HepG2 (cell line): ENCODE measurements at regions of chr1 and their contacts with region 1.

Region 1: GRCh38 chr1:235160957-235161684 is at the start of gene RBM34:
- DNase-seq: peak; percentile 89
- ATAC-seq: peak; percentile 93
- H3K4me3 ChIP-seq: peak within 1 kb of the TSS; percentile 75 to 91 (median 76)
- H3K27ac ChIP-seq: peak within 1 kb of the TSS; percentile 85
- H3K4me1 ChIP-seq: peaks cover 51% of the 10 kb centered on the region
- H3K27me3 ChIP-seq: no peaks in the 10 kb centered on the region
- CTCF ChIP-seq: peak; percentile 42
- EP300 ChIP-seq: no peak
- POLR2A ChIP-seq: peak; percentile 90 to 96
- RAD21 ChIP-seq: peak; percentile 36; the same call in 1 of the 2 replicates
- total RNA-seq, gene RBM34: 73.0 and 105 TPM in 2 replicates

Region 2: DNA sequence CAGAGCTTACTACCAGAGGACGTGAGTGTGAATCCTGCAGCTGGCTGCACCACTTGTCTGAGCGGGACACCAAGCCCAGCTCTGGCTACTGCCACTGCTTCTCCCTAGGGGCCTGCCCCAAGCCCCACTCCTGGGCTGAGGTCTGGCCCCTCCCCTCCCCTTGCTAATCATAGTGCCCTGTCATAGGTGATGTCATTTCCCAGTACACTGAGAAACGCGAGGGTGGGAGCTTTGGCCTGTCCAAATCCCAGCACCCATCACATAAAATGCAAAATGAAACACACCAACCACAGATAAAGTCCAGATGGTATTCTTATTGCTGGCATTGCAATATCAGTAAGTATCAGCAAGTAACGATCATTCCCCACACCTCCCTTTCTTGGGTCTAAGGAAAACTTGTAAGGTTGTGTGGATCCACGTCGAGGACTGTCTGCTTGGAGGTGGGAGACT is 110.2 kb before region 1 on chr1:
- CTCF ChIA-PET with region 1: no interaction called
- POLR2A ChIA-PET with region 1: no interaction called
- in situ Hi-C with region 1: no loop called
- intact Hi-C with region 1: no loop called
- DNase-seq: no peak
- ATAC-seq: peak; percentile 14; the same call in 2 of the 3 replicates
- H3K4me3 ChIP-seq: no peak overlapping the region
- H3K27ac ChIP-seq: no peak overlapping the region
- H3K4me1 ChIP-seq: peaks cover 27% of the 10 kb centered on the region
- H3K27me3 ChIP-seq: no peaks in the 10 kb centered on the region
- CTCF ChIP-seq: no peak
- EP300 ChIP-seq: no peak
- POLR2A ChIP-seq: 0 out of 4 replicates have a peak, but pooled peaks of 1 of the 2 experiments have one; percentile 17
- RAD21 ChIP-seq: no peak

Region 3: GRCh38 chr1:235105051-235106043 is 55.8 kb before region 1 on chr1:
- CTCF ChIA-PET with region 1: no interaction called
- POLR2A ChIA-PET with region 1: no interaction called
- in situ Hi-C with region 1: no loop called
- intact Hi-C with region 1: loop called (anchors 10 kb)
- DNase-seq: no peak
- ATAC-seq: 0 out of 3 replicates have a peak, but pooled peaks have one; percentile 1
- H3K4me3 ChIP-seq: no peak overlapping the region
- H3K27ac ChIP-seq: no peak overlapping the region
- H3K4me1 ChIP-seq: peaks cover 24% of the 10 kb centered on the region
- H3K27me3 ChIP-seq: no peaks in the 10 kb centered on the region
- CTCF ChIP-seq: no peak
- EP300 ChIP-seq: no peak
- POLR2A ChIP-seq: no peak
- RAD21 ChIP-seq: no peak

Region 4: DNA sequence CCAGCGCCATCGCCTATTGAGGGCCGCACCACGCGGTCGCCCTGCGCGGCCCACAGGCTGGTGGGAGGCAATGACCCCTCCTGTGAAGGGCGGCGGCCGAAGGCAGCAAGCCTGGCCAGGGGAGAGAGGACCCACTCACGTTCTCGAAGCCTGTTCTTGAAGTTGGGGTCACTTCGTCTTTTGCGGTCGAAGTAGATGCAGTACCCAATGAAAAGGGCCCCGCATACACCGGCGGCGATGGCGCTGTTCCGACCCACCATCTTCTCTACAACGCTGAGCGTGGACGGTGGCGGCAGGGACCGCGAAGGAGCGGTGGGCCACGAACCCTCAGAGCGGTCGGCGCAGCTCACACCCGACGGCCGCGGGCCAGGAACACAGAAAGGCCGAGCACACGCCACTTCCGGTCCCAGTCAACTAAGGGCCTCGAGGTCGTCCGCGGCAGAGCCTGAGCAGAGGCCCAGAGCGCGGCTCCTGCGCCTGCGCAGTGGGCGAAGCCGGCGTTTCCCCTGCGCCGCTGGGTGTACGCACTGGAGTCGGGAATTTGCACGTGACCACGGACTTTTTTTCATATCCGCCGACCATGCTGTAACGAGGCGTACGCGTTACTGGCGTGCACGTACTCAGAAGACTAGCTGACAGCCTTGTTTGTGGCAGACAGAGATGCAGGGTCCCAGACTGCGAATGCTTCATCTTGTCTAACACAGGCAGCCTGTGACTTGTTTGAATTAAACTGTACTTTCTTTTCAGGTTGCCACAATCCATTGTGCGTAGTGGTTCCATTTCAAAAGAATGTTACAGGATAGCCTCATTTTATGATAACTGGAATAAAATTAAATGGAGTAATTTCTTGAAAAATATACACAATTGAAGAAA is 32.4 kb before region 1 on chr1 and contains the start of gene TOMM20:
- CTCF ChIA-PET with region 1: no interaction called
- POLR2A ChIA-PET with region 1: interaction called, 15 read pairs
- in situ Hi-C with region 1: no loop called
- intact Hi-C with region 1: loop called (anchors 5 kb)
- DNase-seq: peak; percentile 97
- ATAC-seq: peak; percentile 92
- H3K4me3 ChIP-seq: peak within 1 kb of the TSS; percentile 82 to 94 (median 89)
- H3K27ac ChIP-seq: peak within 1 kb of the TSS; percentile 94
- H3K4me1 ChIP-seq: peaks cover 55% of the 10 kb centered on the region
- H3K27me3 ChIP-seq: no peaks in the 10 kb centered on the region; a peak in 1 of 5 replicates
- CTCF ChIP-seq: no peak
- EP300 ChIP-seq: peak in 1 of 2 experiments; percentile 5; a peak in 1 of 4 replicates
- POLR2A ChIP-seq: peak; percentile 93 to 96
- RAD21 ChIP-seq: 0 out of 2 replicates have a peak, but pooled peaks have one; percentile 11
- total RNA-seq, gene TOMM20: 138 and 153 TPM in 2 replicates